Activated CD8-positive, alpha-beta T cell treated with anti-CD3 and anti-CD28 coated beads, Interleukin-2, amount 10 ng/mL, durations not matched to agents 7 days and 5 days (primary cell): ENCODE measurements at regions of chr2 and their contacts with region 1.

Region 1: GRCh38 chr2:112958428-112959108 is 19.2 kb upstream of the IL36G start:
- DNase-seq: peak; percentile 57
- ATAC-seq: peak; percentile 86
- H3K4me3 Mint-ChIP-seq: no peak overlapping the region
- H3K27ac Mint-ChIP-seq: no peak overlapping the region
- H3K4me1 Mint-ChIP-seq: no peaks in the 10 kb centered on the region
- H3K27me3 Mint-ChIP-seq: peaks cover 3% of the 10 kb centered on the region

Region 2: GRCh38 chr2:112869258-112869885 is 89.2 kb before region 1 on chr2:
- CTCF ChIA-PET with region 1: no interaction called
- POLR2A ChIA-PET with region 1: no interaction called
- DNase-seq: no peak
- ATAC-seq: no peak
- H3K4me3 Mint-ChIP-seq: no peak overlapping the region
- H3K27ac Mint-ChIP-seq: no peak overlapping the region
- H3K4me1 Mint-ChIP-seq: peaks cover 2% of the 10 kb centered on the region
- H3K27me3 Mint-ChIP-seq: peaks cover 52% of the 10 kb centered on the region

Region 3: GRCh38 chr2:112891385-112891831 is 67.2 kb before region 1 on chr2:
- CTCF ChIA-PET with region 1: no interaction called
- POLR2A ChIA-PET with region 1: no interaction called
- DNase-seq: no peak
- ATAC-seq: no peak
- H3K4me3 Mint-ChIP-seq: no peak overlapping the region
- H3K27ac Mint-ChIP-seq: no peak overlapping the region
- H3K4me1 Mint-ChIP-seq: no peaks in the 10 kb centered on the region
- H3K27me3 Mint-ChIP-seq: peaks cover 12% of the 10 kb centered on the region

Region 4: GRCh38 chr2:112924821-112925220 is 33.7 kb before region 1 on chr2:
- CTCF ChIA-PET with region 1: no interaction called
- POLR2A ChIA-PET with region 1: no interaction called
- DNase-seq: no peak
- ATAC-seq: no peak
- H3K4me3 Mint-ChIP-seq: no peak overlapping the region
- H3K27ac Mint-ChIP-seq: no peak overlapping the region
- H3K4me1 Mint-ChIP-seq: peaks cover 3% of the 10 kb centered on the region
- H3K27me3 Mint-ChIP-seq: peaks cover 5% of the 10 kb centered on the region

Region 5: DNA sequence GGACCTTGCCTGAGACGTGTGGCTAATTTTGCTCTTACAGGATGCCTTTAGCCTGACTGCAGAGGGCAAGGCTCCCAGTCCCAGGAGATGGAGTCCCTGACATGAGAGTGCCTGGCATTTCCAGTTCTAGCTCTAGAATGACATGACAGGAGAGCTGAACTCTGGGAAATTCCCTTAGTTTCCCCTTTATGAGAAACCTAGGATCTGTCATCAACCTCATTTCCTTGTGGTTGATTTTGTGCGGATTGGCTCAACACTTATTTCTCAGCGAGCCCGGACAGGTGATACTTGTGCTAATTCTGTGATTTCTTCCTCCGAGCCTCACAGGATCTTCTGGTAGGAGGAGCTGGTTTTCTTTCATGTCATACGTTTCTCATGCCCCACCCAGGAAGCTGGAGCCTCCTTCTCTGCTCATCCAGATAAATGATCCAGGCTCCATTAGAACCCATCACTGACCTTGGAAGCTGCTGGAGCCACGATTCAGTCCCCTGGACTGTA is 19.0 kb after region 1 on chr2 and contains the start of gene IL36G:
- CTCF ChIA-PET with region 1: interaction called, 12 read pairs
- POLR2A ChIA-PET with region 1: no interaction called
- DNase-seq: no peak
- ATAC-seq: no peak
- H3K4me3 Mint-ChIP-seq: no peak within 1 kb of the TSS
- H3K27ac Mint-ChIP-seq: no peak within 1 kb of the TSS
- H3K4me1 Mint-ChIP-seq: no peaks in the 10 kb centered on the region
- H3K27me3 Mint-ChIP-seq: no peaks in the 10 kb centered on the region
- total RNA-seq, gene IL36G: not detected

Region 6: GRCh38 chr2:113060396-113060795 is 101.8 kb after region 1 on chr2:
- CTCF ChIA-PET with region 1: no interaction called
- POLR2A ChIA-PET with region 1: no interaction called
- DNase-seq: peak; percentile 4
- ATAC-seq: no peak
- H3K4me3 Mint-ChIP-seq: no peak overlapping the region
- H3K27ac Mint-ChIP-seq: no peak overlapping the region
- H3K4me1 Mint-ChIP-seq: no peaks in the 10 kb centered on the region
- H3K27me3 Mint-ChIP-seq: peaks cover 2% of the 10 kb centered on the region